ENCODE measurements at regions of chr6 and their contacts with region 1.

Region 1: DNA sequence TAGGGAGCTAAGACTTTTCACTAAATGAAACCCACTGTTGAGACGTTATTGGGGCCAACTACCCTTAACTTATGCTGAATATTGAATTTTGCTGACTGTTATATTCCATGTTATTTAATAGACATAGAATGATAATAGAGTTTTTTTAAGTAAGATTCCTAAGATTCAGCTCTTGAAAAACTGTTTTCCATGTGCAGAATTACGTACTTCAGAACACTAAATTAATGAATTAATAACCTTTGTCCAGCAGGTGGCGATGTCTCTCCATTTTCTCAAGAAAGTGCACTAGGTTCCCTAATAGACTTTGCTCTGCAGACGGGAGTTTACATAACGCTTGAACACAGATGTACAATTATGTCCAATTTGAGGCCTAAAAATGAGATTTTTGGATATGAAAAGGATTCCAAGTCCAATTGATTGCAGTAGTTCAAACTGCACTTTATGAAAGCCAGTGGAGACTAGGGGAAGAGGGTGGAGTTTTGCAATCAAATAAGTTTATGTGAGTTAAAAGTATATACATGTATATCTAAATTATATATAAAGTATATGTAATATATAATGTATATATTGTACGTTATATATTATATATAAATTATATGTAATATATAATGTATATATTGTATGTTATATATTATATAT is 282.1 kb downstream of the UST start:
- DNase-seq: peak; percentile 81
- ATAC-seq: no peak
- H3K4me3 Mint-ChIP-seq: peak overlapping the region; percentile 13
- H3K27ac Mint-ChIP-seq: peak overlapping the region; percentile 85
- H3K4me1 Mint-ChIP-seq: peaks cover 45% of the 10 kb centered on the region
- H3K27me3 Mint-ChIP-seq: no peaks in the 10 kb centered on the region

Region 2: GRCh38 chr6:148578245-148578732 is 450.6 kb before region 1 on chr6:
- CTCF ChIA-PET with region 1: interaction called, 15 read pairs
- POLR2A ChIA-PET with region 1: no interaction called
- intact Hi-C with region 1: loop called in 1 of 2 experiments (anchors 5 kb)
- DNase-seq: peak; percentile 74
- ATAC-seq: peak; percentile 99
- H3K4me3 Mint-ChIP-seq: no peak overlapping the region
- H3K27ac Mint-ChIP-seq: no peak overlapping the region
- H3K4me1 Mint-ChIP-seq: peaks cover 5% of the 10 kb centered on the region
- H3K27me3 Mint-ChIP-seq: peaks cover 36% of the 10 kb centered on the region

Region 3: GRCh38 chr6:149075616-149076364 is 46.9 kb after region 1 on chr6:
- CTCF ChIA-PET with region 1: interaction called, 20 read pairs
- POLR2A ChIA-PET with region 1: interaction called, 4 read pairs
- intact Hi-C with region 1: loop called (anchors 1 kb)
- DNase-seq: peak; percentile 41
- ATAC-seq: peak; percentile 77
- H3K4me3 Mint-ChIP-seq: peak overlapping the region; percentile 21
- H3K27ac Mint-ChIP-seq: peak overlapping the region; percentile 52
- H3K4me1 Mint-ChIP-seq: peaks cover 36% of the 10 kb centered on the region
- H3K27me3 Mint-ChIP-seq: no peaks in the 10 kb centered on the region

Region 4: DNA sequence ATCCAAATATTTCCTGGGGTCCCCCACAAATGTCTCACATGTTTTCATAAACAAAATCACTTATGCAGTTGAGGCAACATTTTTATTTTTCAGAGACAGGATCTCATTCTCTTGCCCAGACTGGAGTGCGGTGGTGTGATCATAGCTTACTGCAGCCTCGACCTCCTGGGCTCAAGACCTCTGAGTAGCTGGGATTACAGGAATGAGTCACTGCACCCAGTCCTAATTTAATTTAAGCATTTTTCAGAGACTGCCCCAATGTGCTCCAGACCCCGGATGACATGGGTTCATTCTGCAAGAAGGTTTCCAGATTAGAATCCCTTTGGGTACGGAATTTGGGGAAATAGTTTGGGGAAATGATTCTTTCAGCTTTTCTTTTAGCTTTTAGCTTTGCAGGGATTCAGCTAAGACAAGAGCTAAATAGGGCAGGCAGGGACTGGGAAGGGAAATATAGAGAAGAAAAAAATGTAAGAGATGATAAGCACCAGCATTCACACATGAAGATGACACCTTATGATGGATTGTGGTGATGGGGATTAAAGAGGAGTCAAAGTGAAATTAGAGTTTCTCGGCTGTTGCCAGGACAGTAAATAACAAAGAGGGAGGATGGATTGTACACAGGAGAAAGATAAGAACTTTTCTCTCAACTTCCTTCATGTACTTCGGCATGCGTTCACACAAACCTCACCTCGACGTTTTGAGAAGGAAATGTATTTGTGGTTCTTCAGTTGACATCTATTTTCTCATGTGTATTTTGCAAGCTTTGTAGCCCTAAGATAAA is 119.2 kb after region 1 on chr6:
- CTCF ChIA-PET with region 1: interaction called, 4 read pairs
- POLR2A ChIA-PET with region 1: interaction called, 3 read pairs
- intact Hi-C with region 1: loop called in 1 of 2 experiments (anchors 2 kb)
- DNase-seq: no peak
- ATAC-seq: peak; percentile 63
- H3K4me3 Mint-ChIP-seq: peak overlapping the region; percentile 9
- H3K27ac Mint-ChIP-seq: peak overlapping the region; percentile 82
- H3K4me1 Mint-ChIP-seq: peaks cover 60% of the 10 kb centered on the region
- H3K27me3 Mint-ChIP-seq: no peaks in the 10 kb centered on the region

Region 5: DNA sequence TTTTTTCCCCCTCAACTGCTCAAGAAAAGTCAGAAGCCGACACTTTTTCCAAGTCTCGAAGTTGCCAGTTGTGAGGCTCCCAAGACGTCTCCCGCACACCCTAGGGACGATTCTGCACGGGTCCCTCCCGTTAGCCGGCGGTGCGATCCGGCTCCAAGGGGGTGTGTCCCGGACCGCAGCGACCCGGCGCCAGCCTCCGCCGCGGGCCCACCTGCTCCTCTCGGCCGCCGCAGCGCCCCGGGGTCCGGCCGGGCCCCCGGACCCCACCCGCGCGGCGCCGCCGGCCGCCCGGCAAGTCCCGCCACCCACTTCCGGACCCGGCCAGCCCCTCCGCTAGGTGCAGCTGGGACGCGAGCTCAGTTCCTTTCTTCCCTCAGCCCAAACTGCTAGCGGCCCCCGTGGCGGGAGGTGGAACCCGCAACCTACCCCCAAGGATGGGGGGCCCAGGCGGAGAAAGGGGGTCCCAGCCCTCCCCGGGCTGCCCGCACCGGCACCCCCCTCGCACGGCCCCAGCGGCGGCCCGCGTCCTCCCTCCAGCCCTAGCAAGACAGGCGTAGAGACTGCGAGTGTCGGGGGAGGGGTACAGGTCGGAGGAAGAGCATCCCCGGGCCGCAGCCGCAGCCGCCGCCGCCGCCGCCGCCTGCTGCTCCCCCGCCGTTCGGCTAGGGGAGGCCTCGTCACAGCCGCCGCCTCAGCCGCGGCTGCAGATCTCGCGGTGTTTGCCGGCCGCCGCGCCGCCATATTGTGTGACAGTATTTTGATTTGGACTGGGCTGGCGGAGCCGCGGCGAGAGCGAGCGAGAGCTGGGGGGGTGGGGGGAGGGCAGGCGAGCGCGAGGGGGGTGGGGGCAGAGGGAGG is 288.1 kb after region 1 on chr6:
- CTCF ChIA-PET with region 1: interaction called, 4 read pairs
- POLR2A ChIA-PET with region 1: interaction called, 4 read pairs
- intact Hi-C with region 1: loop called (anchors 1 to 2 kb)
- DNase-seq: peak; percentile 94
- ATAC-seq: peak; percentile 71
- H3K4me3 Mint-ChIP-seq: peak overlapping the region; percentile 88
- H3K27ac Mint-ChIP-seq: peak overlapping the region; percentile 92
- H3K4me1 Mint-ChIP-seq: peaks cover 23% of the 10 kb centered on the region
- H3K27me3 Mint-ChIP-seq: no peaks in the 10 kb centered on the region

Region 6: DNA sequence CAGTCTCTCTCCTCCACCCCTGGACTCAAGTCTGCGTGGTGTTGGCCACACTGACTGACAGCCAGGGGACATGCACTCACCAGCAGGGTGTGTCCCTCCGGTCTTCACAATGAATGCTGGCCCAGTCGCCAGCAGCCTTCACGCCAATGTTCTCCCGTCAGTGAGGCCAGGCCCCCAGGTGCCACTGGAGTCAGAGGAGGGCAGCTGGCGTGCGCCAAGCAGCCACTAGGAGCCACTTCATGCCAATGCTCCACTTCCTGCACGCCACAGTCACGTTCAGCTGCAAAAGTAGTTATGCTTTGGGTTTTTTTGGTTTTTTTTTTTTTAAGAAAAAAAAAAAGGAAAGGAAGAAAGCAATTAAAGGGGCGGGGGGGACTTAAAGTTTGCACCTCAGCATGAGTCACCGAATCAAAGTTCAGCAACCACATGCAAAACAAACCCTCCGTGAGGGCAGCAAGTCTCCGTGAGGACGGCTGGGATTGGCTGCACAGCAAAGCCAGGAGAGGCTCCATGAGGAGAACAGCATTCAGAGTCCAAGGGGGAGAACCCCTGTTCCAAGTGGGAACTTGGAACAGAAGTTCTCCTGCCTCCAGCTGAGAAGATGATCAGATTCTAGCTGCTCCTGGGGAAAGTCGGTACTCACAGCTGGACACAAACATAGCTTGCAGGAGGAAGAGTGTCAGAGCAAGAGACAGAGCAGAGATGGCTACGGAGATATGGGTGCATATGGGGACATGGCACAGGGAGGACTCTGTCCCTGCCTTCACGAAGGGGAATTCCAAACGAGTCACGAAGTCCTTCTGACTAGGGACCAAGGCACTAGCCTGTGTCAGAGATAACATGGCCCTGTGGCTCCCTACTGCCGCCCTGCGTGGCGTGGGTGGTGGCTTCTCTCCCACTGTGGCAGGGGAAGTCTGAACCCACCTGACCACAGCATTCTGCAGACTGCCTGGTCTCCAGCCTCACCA is 456.1 kb after region 1 on chr6 and contains the start of gene ZC3H12D:
- CTCF ChIA-PET with region 1: no interaction called
- POLR2A ChIA-PET with region 1: no interaction called
- intact Hi-C with region 1: loop called in 1 of 2 experiments (anchors 1 kb)
- DNase-seq: peak; percentile 92
- ATAC-seq: peak; percentile 78
- H3K4me3 Mint-ChIP-seq: peak within 1 kb of the TSS; percentile 92
- H3K27ac Mint-ChIP-seq: peak within 1 kb of the TSS; percentile 99
- H3K4me1 Mint-ChIP-seq: peaks cover 65% of the 10 kb centered on the region
- H3K27me3 Mint-ChIP-seq: no peaks in the 10 kb centered on the region
- total RNA-seq, gene ZC3H12D: 72.2 to 89.9 TPM

Measured in activated CD4-positive, alpha-beta T cell treated with anti-CD3 and anti-CD28 coated beads for 36 hours (primary cell).